Mammary epithelial cell (primary cell): ENCODE measurements at regions of chrX and their contacts with region 1.

Region 1: DNA sequence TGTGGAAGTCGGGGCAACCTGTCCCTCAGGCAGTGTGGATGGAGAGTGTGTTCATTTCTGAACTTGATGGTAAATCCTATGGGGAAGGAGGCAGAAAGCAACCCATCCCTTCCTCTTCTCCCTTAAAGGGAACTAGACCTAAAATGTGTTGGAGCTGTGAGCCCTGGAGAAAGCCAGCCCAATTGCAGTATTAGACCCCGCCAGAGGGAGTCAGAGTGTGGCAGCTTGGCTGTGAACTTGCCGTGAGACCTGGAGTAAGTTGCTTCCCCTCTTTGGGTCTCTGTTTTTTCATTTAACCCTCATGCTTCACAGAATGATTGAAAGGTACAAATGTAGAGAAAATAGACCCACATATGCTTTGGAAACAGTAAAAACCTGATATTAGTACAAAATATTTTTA is 108.7 kb upstream of the PAK3 start:
- DNase-seq: no peak
- H3K4me3 ChIP-seq: no peak overlapping the region
- H3K27ac ChIP-seq: no peak overlapping the region
- H3K4me1 ChIP-seq: peaks cover 5% of the 10 kb centered on the region
- H3K27me3 ChIP-seq: no peaks in the 10 kb centered on the region
- CTCF ChIP-seq: peak; percentile 11 to 17

Region 2: DNA sequence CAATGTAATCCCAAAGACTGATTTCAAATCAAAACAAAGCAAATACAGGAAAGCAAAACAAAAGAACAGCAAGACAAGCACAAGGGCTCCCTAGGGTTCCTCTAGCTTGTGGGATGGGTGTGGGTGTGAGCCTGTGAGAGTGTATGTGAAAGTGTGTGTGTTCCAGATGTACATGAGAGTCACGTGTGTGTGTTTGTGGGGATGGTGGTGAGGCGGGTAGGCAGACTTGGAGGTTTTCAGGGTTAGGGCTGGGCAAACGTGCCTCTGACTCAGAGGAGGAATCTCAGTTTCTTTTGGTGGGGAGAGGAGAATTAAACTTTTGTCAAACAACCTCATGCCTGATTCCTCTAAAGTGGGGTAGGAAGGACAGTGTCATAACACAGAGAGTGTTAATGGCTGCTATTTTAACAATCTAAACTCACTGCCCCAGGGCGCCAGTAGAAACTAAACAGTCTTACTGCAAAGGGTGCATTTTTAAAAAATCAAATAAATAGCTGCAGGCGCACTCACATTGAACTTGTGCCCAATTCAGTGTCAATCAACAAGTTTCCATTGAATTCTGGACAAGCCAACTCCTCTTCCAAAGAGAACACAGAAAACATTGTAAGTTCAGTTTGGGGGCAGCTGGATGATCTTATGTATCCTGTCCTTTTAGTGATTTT is 243.5 kb before region 1 on chrX:
- CTCF ChIA-PET with region 1: no interaction called
- dilution Hi-C with region 1: no loop called
- in situ Hi-C with region 1: no loop called
- intact Hi-C with region 1: no loop called
- DNase-seq: peak; percentile 29
- H3K4me3 ChIP-seq: no peak overlapping the region
- H3K27ac ChIP-seq: no peak overlapping the region
- H3K4me1 ChIP-seq: peaks cover 10% of the 10 kb centered on the region
- H3K27me3 ChIP-seq: no peaks in the 10 kb centered on the region
- CTCF ChIP-seq: no peak

Region 3: GRCh38 chrX:110920991-110921390 is 66.3 kb before region 1 on chrX:
- CTCF ChIA-PET with region 1: no interaction called
- dilution Hi-C with region 1: loop called (anchors 5 kb)
- in situ Hi-C with region 1: no loop called
- intact Hi-C with region 1: no loop called
- DNase-seq: no peak
- H3K4me3 ChIP-seq: no peak overlapping the region
- H3K27ac ChIP-seq: no peak overlapping the region
- H3K4me1 ChIP-seq: peaks cover 3% of the 10 kb centered on the region
- H3K27me3 ChIP-seq: no peaks in the 10 kb centered on the region
- CTCF ChIP-seq: no peak